ENCODE measurements at regions of chr13 and their contacts with region 1.

Region 1: DNA sequence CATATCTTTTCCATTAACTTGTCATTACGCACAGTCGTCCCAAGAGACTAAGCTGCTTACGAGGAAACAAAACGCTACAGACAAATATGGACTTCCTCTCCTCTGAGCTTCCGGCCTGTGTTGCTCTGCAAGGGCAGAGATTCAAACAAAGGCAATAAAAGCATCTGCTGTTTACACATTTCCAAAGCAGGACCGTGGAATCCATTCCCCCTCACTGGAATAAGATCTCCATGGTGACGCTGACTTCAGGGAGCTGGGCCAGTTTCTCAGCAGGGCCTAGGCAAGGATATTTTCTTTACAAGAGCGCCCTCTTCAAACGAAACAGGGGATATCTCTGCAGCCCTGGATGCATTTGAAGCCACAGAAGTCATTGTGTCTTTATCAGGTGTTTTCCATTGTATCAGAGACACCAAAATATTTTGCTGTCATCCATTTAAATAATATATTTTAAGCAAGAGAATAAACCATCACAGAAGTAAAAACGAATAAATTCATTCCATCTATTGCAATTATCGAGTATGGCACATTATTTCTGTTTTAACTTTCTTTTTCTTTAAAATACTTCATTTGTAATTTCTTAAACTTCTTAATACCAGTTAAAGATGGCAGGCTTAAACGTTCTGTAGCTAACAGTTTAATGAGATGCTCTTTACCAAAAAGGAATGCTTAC is 177.5 kb downstream of the DCLK1 start:
- DNase-seq: peak; percentile 87
- H3K4me3 ChIP-seq: peak overlapping the region; percentile 13
- H3K27ac ChIP-seq: no peak overlapping the region
- H3K4me1 ChIP-seq: no peaks in the 10 kb centered on the region
- H3K27me3 ChIP-seq: no peaks in the 10 kb centered on the region
- CTCF ChIP-seq: peak; percentile 85

Region 2: GRCh38 chr13:35630551-35631275 is 323.0 kb before region 1 on chr13:
- CTCF ChIA-PET with region 1: no interaction called
- POLR2A ChIA-PET with region 1: no interaction called
- intact Hi-C with region 1: loop called (anchors 10 kb)
- DNase-seq: peak; percentile 66
- H3K4me3 ChIP-seq: no peak overlapping the region
- H3K27ac ChIP-seq: no peak overlapping the region
- H3K4me1 ChIP-seq: no peaks in the 10 kb centered on the region
- H3K27me3 ChIP-seq: no peaks in the 10 kb centered on the region
- CTCF ChIP-seq: peak; percentile 79

Region 3: DNA sequence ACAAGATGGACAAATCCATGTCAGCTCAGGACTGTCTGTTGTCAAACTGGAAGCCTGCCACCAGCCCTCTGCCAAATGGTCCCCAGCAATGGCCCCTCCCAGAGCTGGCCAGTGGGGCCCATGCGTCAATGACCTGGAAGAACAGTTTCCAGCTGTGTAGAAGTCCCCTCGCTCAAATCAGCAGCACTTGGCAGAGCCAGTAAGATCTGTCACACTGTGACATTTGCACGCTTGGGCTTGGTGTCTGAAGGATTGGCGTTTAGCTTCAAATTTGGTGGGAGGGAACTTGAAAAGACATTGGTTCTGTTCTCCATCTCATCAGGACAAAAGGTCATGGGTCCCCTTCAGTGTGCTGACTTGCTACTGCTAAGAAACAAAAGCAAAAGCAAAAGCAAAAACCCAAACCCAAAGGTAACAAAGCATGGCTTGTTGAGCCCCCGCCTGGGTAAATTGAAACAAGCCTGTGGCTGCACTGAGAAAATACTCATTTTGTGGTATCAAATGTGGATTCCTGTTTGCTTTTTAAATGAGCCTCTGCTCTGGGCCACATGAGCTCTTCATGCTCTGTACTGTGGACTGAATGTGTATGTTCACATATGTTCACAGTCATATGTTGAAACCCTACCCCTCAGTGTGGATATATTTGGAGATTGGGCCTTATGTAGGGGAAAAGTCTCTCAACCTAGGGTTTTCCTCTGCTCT is 223.6 kb before region 1 on chr13:
- CTCF ChIA-PET with region 1: no interaction called
- POLR2A ChIA-PET with region 1: no interaction called
- intact Hi-C with region 1: loop called (anchors 5 kb)
- DNase-seq: no peak
- H3K4me3 ChIP-seq: no peak overlapping the region
- H3K27ac ChIP-seq: no peak overlapping the region
- H3K4me1 ChIP-seq: no peaks in the 10 kb centered on the region
- H3K27me3 ChIP-seq: no peaks in the 10 kb centered on the region
- CTCF ChIP-seq: no peak

Region 4: GRCh38 chr13:35818633-35819067 is 135.0 kb before region 1 on chr13:
- CTCF ChIA-PET with region 1: interaction called, 7 read pairs
- POLR2A ChIA-PET with region 1: no interaction called
- intact Hi-C with region 1: loop called (anchors 2 kb)
- DNase-seq: peak; percentile 50
- H3K4me3 ChIP-seq: no peak overlapping the region
- H3K27ac ChIP-seq: no peak overlapping the region
- H3K4me1 ChIP-seq: peaks cover 10% of the 10 kb centered on the region
- H3K27me3 ChIP-seq: no peaks in the 10 kb centered on the region
- CTCF ChIP-seq: peak; percentile 72